B cell (primary cell): ENCODE measurements at regions of chr13 and their contacts with region 1.

Region 1: GRCh38 chr13:30509254-30510050 is 43.7 kb upstream of the HMGB1 start:
- DNase-seq: no peak
- ATAC-seq: no peak
- H3K4me3 ChIP-seq: no peak overlapping the region
- H3K4me3 Mint-ChIP-seq: no peak overlapping the region
- H3K27ac ChIP-seq: no peak overlapping the region
- H3K27ac Mint-ChIP-seq: no peak overlapping the region
- H3K4me1 ChIP-seq: no peaks in the 10 kb centered on the region
- H3K4me1 Mint-ChIP-seq: peaks cover 5% of the 10 kb centered on the region
- H3K27me3 ChIP-seq: no peaks in the 10 kb centered on the region
- H3K27me3 Mint-ChIP-seq: no peaks in the 10 kb centered on the region
- CTCF ChIP-seq: no peak

Region 2: GRCh38 chr13:30526612-30527495 is 17.4 kb after region 1 on chr13:
- CTCF ChIA-PET with region 1: no interaction called
- POLR2A ChIA-PET with region 1: interaction called, 13 read pairs
- intact Hi-C with region 1: no loop called
- DNase-seq: no peak
- ATAC-seq: no peak
- H3K4me3 ChIP-seq: no peak overlapping the region
- H3K4me3 Mint-ChIP-seq: no peak overlapping the region
- H3K27ac ChIP-seq: no peak overlapping the region
- H3K27ac Mint-ChIP-seq: no peak overlapping the region
- H3K4me1 ChIP-seq: no peaks in the 10 kb centered on the region
- H3K4me1 Mint-ChIP-seq: no peaks in the 10 kb centered on the region
- H3K27me3 ChIP-seq: no peaks in the 10 kb centered on the region
- H3K27me3 Mint-ChIP-seq: no peaks in the 10 kb centered on the region
- CTCF ChIP-seq: no peak